ENCODE measurements at regions of chr16 and their contacts with region 1.

Region 1: DNA sequence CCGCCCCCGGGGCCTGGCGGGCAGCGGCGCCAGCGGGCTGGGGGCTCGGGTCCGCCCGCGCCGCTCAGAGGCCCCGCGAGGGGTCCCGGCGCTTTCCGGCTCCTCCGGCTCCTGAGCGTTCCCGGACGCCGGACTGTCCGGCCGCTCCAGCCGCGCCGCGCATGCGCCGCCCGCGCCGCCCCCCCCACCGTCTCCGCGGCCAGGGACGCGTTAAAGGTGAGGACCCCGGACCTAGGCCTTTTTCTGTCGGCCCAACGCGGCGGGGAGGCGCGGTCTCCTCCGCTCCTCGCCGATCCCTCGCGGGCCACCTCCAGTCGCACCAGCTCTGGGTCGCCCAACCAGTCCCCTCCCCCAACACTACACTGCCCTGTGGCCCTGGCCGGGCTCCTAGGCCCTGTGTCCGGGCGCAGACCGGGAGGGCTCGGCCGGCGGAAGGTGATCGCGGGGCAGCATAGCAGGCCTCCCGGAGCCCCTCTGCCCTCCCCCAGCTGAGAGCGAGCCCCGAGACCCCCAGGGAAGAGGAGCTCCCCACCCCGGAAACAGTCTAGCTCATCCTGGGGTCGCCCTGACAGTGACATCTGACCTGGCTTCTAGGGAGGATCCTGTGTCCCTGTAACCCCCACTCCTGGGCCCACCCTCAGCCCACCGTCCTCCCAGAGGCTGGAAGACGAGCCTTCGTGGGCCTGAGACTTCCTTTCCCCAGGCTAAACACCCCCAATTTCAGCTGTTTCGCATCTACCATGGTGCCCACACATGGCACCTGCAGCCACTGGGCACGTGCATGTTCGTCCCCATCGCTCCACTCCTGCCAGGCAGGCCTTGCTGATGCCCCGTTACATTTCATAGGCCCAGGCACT is 14.6 kb upstream of the BCAR1 start:
- DNase-seq: peak; percentile 73 to 87 (median 78)
- ATAC-seq: peak; percentile 14 to 58 (median 44)
- H3K4me3 ChIP-seq: peak overlapping the region; percentile 70 to 100 (median 94)
- H3K27ac ChIP-seq: peak overlapping the region; percentile 84 to 99 (median 96)
- H3K4me1 ChIP-seq: peaks cover 27 to 66% (median 52%) of the 10 kb centered on the region in 12 donors
- H3K27me3 ChIP-seq: peaks cover 0 to 50% (median 0%) of the 10 kb centered on the region in 9 donors
- CTCF ChIP-seq: no peak
- POLR2A ChIP-seq: peak in 1 of 2 donors; percentile 65

Region 2: GRCh38 chr16:75198135-75198600 is 67.9 kb before region 1 on chr16:
- intact Hi-C with region 1: no loop called
- DNase-seq: peak in 1 of 5 donors; percentile 69
- ATAC-seq: peak in 2 of 4 donors; percentile 6 to 61
- H3K4me3 ChIP-seq: no peak overlapping the region
- H3K27ac ChIP-seq: no peak overlapping the region
- H3K4me1 ChIP-seq: peaks cover 0 to 23% (median 0%) of the 10 kb centered on the region in 12 donors
- H3K27me3 ChIP-seq: peaks cover 0 to 20% (median 9%) of the 10 kb centered on the region in 9 donors
- CTCF ChIP-seq: no peak
- POLR2A ChIP-seq: no peak

Region 3: DNA sequence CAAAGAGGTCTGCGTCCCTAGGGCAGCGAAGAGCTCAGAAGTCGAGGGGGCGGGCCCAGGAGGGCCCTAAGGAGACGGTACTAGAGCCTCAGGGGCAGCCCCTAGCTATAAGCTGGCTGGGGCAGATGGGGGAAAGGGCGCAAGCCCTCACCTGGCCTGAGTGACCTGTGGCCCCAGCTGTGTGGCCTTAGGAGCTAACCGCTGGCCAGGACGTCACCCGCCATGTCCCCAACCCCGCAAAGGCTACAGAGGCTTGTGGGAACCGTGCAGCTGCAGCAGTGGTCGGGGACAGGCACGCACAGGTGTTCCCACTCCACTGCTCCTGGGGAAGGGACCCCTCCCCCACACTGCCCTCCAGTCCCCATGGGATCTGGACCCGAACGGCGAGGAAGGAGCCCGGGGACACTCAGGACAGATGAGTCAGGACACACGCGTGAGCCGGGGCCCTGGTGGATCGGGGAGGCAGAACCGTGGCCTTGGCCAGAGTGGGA is 57.1 kb before region 1 on chr16:
- intact Hi-C with region 1: no loop called
- DNase-seq: peak in 1 of 5 donors; percentile 55
- ATAC-seq: no peak
- H3K4me3 ChIP-seq: no peak overlapping the region
- H3K27ac ChIP-seq: no peak overlapping the region
- H3K4me1 ChIP-seq: no peaks in the 10 kb centered on the region
- H3K27me3 ChIP-seq: no peaks in the 10 kb centered on the region
- CTCF ChIP-seq: no peak
- POLR2A ChIP-seq: no peak

Region 4: GRCh38 chr16:75251280-75252048 is 14.6 kb before region 1 on chr16 and contains the start of gene BCAR1:
- intact Hi-C with region 1: loop called in 1 of 10 experiments (anchors 1 kb)
- DNase-seq: peak; percentile 91 to 95 (median 93)
- ATAC-seq: peak; percentile 58 to 81 (median 74)
- H3K4me3 ChIP-seq: peak within 1 kb of the TSS; percentile 65 to 98 (median 88)
- H3K27ac ChIP-seq: peak within 1 kb of the TSS; percentile 86 to 99 (median 94)
- H3K4me1 ChIP-seq: peaks cover 38 to 98% (median 90%) of the 10 kb centered on the region in 12 donors
- H3K27me3 ChIP-seq: peaks cover 0 to 52% (median 0%) of the 10 kb centered on the region in 9 donors
- CTCF ChIP-seq: peak in 7 of 12 donors; percentile 9 to 57 (median 27)
- POLR2A ChIP-seq: peak in 1 of 2 donors; percentile 34
- total RNA-seq, gene BCAR1: 51.4 to 129 (median 72.0) TPM

Region 5: GRCh38 chr16:75342308-75342829 is 76.3 kb after region 1 on chr16:
- intact Hi-C with region 1: loop called in 1 of 10 experiments (anchors 2 kb)
- DNase-seq: no peak
- ATAC-seq: peak in 3 of 4 donors; percentile 67 to 79 (median 69)
- H3K4me3 ChIP-seq: no peak overlapping the region
- H3K27ac ChIP-seq: peak overlapping the region in 7 of 12 donors; percentile 5 to 61 (median 31)
- H3K4me1 ChIP-seq: peaks cover 0 to 35% (median 21%) of the 10 kb centered on the region in 12 donors
- H3K27me3 ChIP-seq: peaks cover 0 to 47% (median 0%) of the 10 kb centered on the region in 9 donors
- CTCF ChIP-seq: no peak
- POLR2A ChIP-seq: no peak

Region 6: DNA sequence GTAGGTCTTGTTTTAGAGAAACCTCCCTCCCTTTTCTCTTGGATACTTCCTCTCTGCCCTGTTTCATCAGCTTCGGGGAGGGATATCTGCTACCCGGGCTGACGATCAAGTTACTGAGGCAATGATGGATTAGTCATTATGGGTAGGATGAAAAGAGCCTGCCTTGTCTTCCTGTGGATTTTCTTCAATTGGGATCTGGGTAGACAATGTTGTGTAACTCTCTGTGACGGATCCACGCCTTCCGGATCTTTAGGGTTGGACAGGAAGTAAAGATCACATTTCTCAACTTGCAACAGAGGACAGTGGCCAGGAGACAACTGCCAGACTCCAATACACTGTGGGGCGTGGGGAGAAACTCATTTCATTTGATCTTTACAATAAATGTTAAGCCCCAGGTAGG is 240.5 kb after region 1 on chr16:
- intact Hi-C with region 1: no loop called
- DNase-seq: peak in 2 of 5 donors; percentile 58 to 66
- ATAC-seq: peak; percentile 36 to 83 (median 75)
- H3K4me3 ChIP-seq: no peak overlapping the region
- H3K27ac ChIP-seq: peak overlapping the region in 6 of 12 donors; percentile 14 to 67 (median 25)
- H3K4me1 ChIP-seq: peaks cover 0 to 12% (median under 1%) of the 10 kb centered on the region in 12 donors
- H3K27me3 ChIP-seq: no peaks in the 10 kb centered on the region
- CTCF ChIP-seq: no peak
- POLR2A ChIP-seq: no peak

Measured in heart left ventricle (tissue), 16 donors.